ENCODE measurements at regions of chr11 and their contacts with region 1.

Region 1: DNA sequence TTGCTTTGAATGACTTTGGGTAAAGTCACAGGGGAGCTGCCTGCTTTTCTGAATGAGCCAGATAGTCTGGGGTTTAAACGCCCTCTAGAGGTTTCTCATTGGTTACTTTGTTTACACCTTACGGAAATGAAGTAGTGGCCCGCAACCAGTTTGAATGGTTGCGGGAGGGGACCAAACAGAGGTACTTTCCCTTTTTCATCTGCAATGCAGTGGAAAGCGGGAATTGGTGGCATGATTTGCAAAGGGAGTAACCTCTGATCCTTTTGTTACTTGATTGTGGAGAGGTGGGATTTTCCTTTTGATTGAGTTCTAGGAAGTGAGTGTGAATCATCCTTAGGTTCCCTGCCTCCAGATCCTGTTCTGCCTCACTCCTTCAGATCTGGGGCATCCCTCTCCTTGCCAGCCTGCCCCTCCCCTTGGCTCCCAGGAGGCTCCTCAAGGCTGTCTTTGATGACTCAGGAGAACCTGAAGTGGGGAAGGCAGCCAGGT is 15.9 kb upstream of the GLYATL1 start:
- DNase-seq: peak in 1 of 2 experiments; percentile 57
- H3K4me3 ChIP-seq: peak overlapping the region in 3 of 4 experiments; percentile 19 to 52 (median 29); a peak in 5 of 8 replicates
- H3K27ac ChIP-seq: no peak overlapping the region
- H3K4me1 ChIP-seq: peaks cover 1 to 22% (median 10%) of the 10 kb centered on the region in 4 experiments; a peak in 5 of 7 replicates
- H3K27me3 ChIP-seq: no peaks in the 10 kb centered on the region
- CTCF ChIP-seq: peak in 2 of 3 experiments; percentile 47 to 48; a peak in 3 of 4 replicates
- EP300 ChIP-seq: no peak
- POLR2A ChIP-seq: no peak
- RAD21 ChIP-seq: peak; percentile 33 to 55; a peak in 3 of 4 replicates

Region 2: GRCh38 chr11:58782066-58782465 is 141.3 kb before region 1 on chr11:
- CTCF ChIA-PET with region 1: no interaction called
- POLR2A ChIA-PET with region 1: no interaction called
- DNase-seq: no peak
- H3K4me3 ChIP-seq: no peak overlapping the region
- H3K27ac ChIP-seq: no peak overlapping the region
- H3K4me1 ChIP-seq: no peaks in the 10 kb centered on the region
- H3K27me3 ChIP-seq: peaks cover 0 to 1% (median 0%) of the 10 kb centered on the region in 4 experiments; a peak in 1 of 7 replicates
- CTCF ChIP-seq: no peak
- EP300 ChIP-seq: no peak
- POLR2A ChIP-seq: no peak
- RAD21 ChIP-seq: no peak

Region 3: DNA sequence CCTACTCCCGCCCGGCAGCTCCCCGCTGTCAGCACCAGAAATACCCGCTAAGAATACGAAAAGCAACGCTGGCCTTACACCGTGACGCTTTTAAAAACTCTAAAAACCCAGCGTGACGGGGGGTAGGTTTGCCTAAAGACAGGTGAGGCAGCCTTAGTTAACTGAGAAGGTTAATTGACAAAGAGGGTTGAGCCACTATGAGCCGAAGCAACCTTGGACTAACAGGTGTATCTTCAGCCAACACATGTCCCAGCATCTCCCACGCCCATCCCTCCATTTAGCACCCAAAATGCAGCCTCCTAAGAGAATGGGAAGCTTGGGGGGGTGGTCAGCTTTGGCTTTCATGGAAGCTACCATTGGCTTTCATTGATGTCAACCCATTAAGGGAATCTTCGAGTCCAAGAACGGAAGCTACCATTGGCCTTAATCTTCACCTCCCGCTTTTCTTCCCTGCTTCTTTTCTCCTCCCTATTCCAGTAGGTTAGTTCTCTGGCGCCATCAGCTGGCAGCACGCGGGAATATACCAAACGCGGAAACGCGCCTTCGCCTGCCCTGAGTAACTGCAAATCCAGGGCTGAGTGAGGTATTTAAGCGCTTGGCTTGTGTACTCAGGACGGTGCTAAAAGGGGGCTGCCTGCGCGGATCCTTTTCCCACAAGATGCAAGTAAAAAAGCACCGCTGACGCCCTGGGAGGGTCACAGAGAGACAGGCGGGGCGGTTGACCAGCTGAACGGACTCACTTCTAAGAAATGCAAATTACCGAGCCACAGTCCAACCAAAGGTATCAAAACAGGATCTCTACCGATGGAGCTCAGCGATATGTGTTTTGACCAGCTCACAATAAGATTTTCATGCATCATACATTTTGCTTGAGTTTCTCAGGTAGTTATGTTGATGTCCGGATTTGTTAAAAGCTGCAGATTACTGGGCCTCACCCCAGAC is 22.6 kb before region 1 on chr11:
- CTCF ChIA-PET with region 1: interaction called, 96 read pairs
- POLR2A ChIA-PET with region 1: interaction called, 18 read pairs
- DNase-seq: peak; percentile 95 to 98
- H3K4me3 ChIP-seq: peak overlapping the region; percentile 38 to 59 (median 46); a peak in 6 of 8 replicates
- H3K27ac ChIP-seq: no peak overlapping the region
- H3K4me1 ChIP-seq: peaks cover 0 to 6% (median 2%) of the 10 kb centered on the region in 4 experiments; a peak in 3 of 7 replicates
- H3K27me3 ChIP-seq: no peaks in the 10 kb centered on the region; a peak in 3 of 7 replicates
- CTCF ChIP-seq: peak; percentile 74 to 86 (median 77)
- EP300 ChIP-seq: no peak; a peak in 1 of 3 replicates
- POLR2A ChIP-seq: no peak
- RAD21 ChIP-seq: peak; percentile 82

Region 4: DNA sequence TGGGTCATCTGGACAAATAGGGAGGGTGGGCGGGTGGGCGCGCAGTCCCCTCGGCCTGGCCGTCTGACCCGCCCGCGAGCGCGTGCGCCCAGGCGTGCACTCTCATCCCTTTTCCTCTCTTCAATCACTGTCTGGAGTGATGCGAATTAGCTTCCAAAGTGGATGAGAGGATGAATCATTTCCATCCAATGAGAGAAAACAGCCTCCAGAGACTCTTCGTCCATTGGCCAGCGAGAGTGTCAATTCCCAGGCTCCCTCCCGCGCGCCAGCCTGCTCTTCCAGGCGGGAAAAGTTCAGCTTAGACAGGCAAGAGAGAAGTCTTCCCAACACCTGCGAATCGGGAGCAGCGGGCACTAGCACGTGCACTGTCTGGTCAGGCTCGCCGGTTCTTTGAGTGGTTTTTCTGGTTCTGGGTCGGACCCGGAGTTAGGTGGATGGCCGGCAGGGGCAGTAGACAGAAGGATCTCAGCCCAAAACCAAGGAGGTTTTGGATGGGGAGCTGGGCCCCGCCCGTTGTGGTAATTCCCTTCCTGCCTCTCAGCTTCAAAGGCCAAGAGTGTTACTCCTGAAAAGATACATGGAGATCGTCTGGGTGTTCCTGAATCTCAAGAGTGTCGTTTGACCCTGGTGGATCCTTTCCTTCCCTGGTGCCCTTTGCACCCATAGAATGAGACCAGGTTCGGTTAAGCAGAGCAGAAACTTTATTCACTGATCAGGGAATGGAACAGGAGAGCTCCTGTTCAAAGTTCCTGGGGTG is 17.4 kb before region 1 on chr11:
- CTCF ChIA-PET with region 1: interaction called, 96 read pairs
- POLR2A ChIA-PET with region 1: interaction called, 18 read pairs
- DNase-seq: peak; percentile 62 to 86
- H3K4me3 ChIP-seq: peak overlapping the region; percentile 75 to 93 (median 76)
- H3K27ac ChIP-seq: no peak overlapping the region
- H3K4me1 ChIP-seq: peaks cover 0 to 5% (median 2%) of the 10 kb centered on the region in 4 experiments; a peak in 4 of 7 replicates
- H3K27me3 ChIP-seq: peaks cover 4 to 12% (median 10%) of the 10 kb centered on the region in 4 experiments; a peak in 6 of 7 replicates
- CTCF ChIP-seq: peak; percentile 43 to 57 (median 50)
- EP300 ChIP-seq: no peak
- POLR2A ChIP-seq: peak in 1 of 2 experiments; percentile 64; a peak in 1 of 3 replicates
- RAD21 ChIP-seq: peak; percentile 16 to 32; a peak in 2 of 4 replicates

Region 5: GRCh38 chr11:58958500-58958899 is 35.2 kb after region 1 on chr11:
- CTCF ChIA-PET with region 1: interaction called, 24 read pairs
- POLR2A ChIA-PET with region 1: interaction called, 3 read pairs
- DNase-seq: peak; percentile 1 to 72
- H3K4me3 ChIP-seq: no peak overlapping the region
- H3K27ac ChIP-seq: no peak overlapping the region
- H3K4me1 ChIP-seq: peaks cover 0 to 4% (median 0%) of the 10 kb centered on the region in 4 experiments; a peak in 1 of 7 replicates
- H3K27me3 ChIP-seq: peaks cover 0 to 3% (median 0%) of the 10 kb centered on the region in 4 experiments; a peak in 1 of 7 replicates
- CTCF ChIP-seq: peak in 2 of 3 experiments; percentile 27 to 47; a peak in 2 of 4 replicates
- EP300 ChIP-seq: no peak
- POLR2A ChIP-seq: no peak
- RAD21 ChIP-seq: no peak; a peak in 1 of 4 replicates

Region 6: GRCh38 chr11:59011655-59012397 is 88.5 kb after region 1 on chr11:
- CTCF ChIA-PET with region 1: no interaction called
- POLR2A ChIA-PET with region 1: no interaction called
- DNase-seq: peak; percentile 27 to 65
- H3K4me3 ChIP-seq: peak overlapping the region in 1 of 4 experiments; percentile 21; a peak in 1 of 8 replicates
- H3K27ac ChIP-seq: no peak overlapping the region
- H3K4me1 ChIP-seq: peaks cover 3 to 9% (median 7%) of the 10 kb centered on the region in 4 experiments; a peak in 4 of 7 replicates
- H3K27me3 ChIP-seq: no peaks in the 10 kb centered on the region
- CTCF ChIP-seq: peak in 1 of 3 experiments; percentile 23; a peak in 1 of 4 replicates
- EP300 ChIP-seq: no peak
- POLR2A ChIP-seq: no peak
- RAD21 ChIP-seq: no peak

Measured in H1 (cell line).